ENCODE measurements at regions of chr6 and their contacts with region 1.

Region 1: GRCh38 chr6:95866732-95867131 is 149.0 kb upstream of the FUT9 start:
- DNase-seq: no peak

Region 2: GRCh38 chr6:95431637-95432228 is 435.0 kb before region 1 on chr6:
- intact Hi-C with region 1: loop called (anchors 5 kb)
- DNase-seq: no peak

Measured in cardiac septum (tissue), 1 donor.